Activated CD8-positive, alpha-beta T cell treated with anti-CD3 and anti-CD28 coated beads, Interleukin-2, amount 10 ng/mL, durations not matched to agents 7 days and 5 days (primary cell): ENCODE measurements at regions of chr1 and their contacts with region 1.

Region 1: GRCh38 chr1:19704247-19705113 is 39.8 kb downstream of the HTR6 start:
- DNase-seq: peak; percentile 53
- ATAC-seq: peak; percentile 58
- H3K4me3 Mint-ChIP-seq: no peak overlapping the region
- H3K27ac Mint-ChIP-seq: no peak overlapping the region
- H3K4me1 Mint-ChIP-seq: peaks cover 12% of the 10 kb centered on the region
- H3K27me3 Mint-ChIP-seq: no peaks in the 10 kb centered on the region

Region 2: GRCh38 chr1:19643602-19644394 is 60.7 kb before region 1 on chr1 and contains the start of gene NBL1:
- CTCF ChIA-PET with region 1: no interaction called
- POLR2A ChIA-PET with region 1: no interaction called
- DNase-seq: peak; percentile 82
- ATAC-seq: peak; percentile 87
- H3K4me3 Mint-ChIP-seq: peak within 1 kb of the TSS; percentile 93
- H3K27ac Mint-ChIP-seq: peak within 1 kb of the TSS; percentile 93
- H3K4me1 Mint-ChIP-seq: peaks cover 44% of the 10 kb centered on the region
- H3K27me3 Mint-ChIP-seq: peaks cover 14% of the 10 kb centered on the region
- total RNA-seq, gene NBL1: 40.1 TPM

Region 3: DNA sequence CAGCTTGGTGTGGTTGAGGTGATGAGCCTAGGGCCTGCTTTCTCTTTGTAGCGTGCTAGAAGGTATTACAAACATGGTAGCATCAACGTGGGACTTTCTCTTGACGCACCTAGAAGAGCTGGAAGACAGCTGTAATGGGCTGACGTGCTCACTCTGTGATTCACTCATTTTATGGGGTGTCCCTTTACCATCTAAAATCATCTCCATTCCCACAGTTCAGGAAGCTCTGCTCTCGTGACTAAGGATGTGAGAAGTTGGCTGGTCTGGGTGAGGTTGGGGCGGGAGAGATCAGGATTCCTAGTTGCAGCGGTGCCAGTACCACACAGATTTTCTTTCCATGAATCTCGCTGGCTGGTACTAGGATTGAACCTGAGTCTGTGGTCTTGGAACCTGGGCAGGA is 35.6 kb before region 1 on chr1:
- CTCF ChIA-PET with region 1: interaction called, 12 read pairs
- POLR2A ChIA-PET with region 1: no interaction called
- DNase-seq: no peak
- ATAC-seq: no peak
- H3K4me3 Mint-ChIP-seq: no peak overlapping the region
- H3K27ac Mint-ChIP-seq: no peak overlapping the region
- H3K4me1 Mint-ChIP-seq: peaks cover 7% of the 10 kb centered on the region
- H3K27me3 Mint-ChIP-seq: peaks cover 33% of the 10 kb centered on the region

Region 4: DNA sequence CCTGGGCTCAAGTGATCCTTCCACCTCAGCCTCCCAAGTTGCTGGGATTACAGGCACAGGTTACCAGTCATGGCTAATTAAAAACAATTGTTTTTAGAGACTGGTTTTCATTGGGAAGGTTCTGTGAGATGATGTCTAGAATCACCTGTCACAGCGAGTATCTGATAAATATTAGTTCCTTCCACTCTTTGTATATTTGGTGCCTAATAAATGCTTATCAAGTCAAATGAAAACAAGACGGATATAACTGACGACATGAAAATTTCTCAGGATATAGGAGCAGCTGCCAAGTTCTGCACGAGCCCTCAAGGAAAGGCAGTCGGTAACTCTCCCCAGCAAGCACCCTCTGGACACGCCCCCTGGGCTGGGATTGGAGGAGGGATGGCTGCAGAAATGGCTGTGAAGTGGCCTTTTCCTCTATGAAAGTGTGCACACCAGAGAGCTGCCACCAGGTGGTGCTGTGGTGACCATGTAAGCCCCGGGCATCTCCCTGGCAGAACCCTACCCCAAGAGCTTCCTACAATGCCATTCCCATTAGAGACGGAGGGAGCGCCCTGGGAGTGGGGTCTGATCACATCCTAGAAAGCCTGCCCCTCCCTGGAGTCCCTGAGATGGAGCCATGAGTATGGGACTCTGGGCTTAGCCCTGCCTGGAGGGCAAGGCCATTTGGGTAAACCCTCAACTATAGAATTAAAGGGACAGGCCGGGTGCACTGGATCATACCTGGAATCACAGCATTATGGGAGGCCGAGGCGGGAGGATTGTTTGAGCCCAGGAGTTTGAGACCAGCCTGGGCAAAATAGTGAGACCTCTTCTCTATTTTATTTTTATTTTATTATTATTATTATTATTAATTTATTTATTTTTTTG is 11.1 kb after region 1 on chr1:
- CTCF ChIA-PET with region 1: interaction called, 20 read pairs
- POLR2A ChIA-PET with region 1: no interaction called
- DNase-seq: peak; percentile 89
- ATAC-seq: peak; percentile 98
- H3K4me3 Mint-ChIP-seq: no peak overlapping the region
- H3K27ac Mint-ChIP-seq: no peak overlapping the region
- H3K4me1 Mint-ChIP-seq: peaks cover 15% of the 10 kb centered on the region
- H3K27me3 Mint-ChIP-seq: no peaks in the 10 kb centered on the region

Region 5: DNA sequence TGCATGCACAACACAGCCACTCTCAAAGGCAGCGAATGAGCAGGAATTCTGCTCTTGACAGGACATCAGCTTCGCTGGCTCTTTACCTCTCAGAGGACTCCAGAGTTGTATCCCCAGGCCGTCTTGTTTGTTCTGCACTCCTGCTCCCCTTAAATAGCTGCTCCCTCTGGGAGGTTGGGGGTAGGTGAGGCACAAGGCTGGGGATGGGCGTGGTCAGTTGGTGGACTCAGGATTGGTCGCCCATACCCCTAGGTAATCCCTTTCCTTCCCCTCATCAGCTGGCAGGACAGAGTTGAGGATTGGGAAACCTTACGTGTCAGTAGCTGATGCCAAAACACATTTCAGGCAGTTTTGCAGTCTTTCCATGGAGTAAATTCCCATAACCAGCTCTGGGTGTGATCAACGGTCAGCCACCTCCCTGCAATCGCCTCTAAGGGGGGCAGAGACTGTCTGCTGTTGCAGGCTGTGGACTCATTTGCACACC is 275.1 kb after region 1 on chr1 and contains the start of gene PLA2G2A:
- CTCF ChIA-PET with region 1: no interaction called
- POLR2A ChIA-PET with region 1: no interaction called
- DNase-seq: no peak
- ATAC-seq: no peak
- H3K4me3 Mint-ChIP-seq: no peak within 1 kb of the TSS
- H3K27ac Mint-ChIP-seq: no peak within 1 kb of the TSS
- H3K4me1 Mint-ChIP-seq: no peaks in the 10 kb centered on the region
- H3K27me3 Mint-ChIP-seq: peaks cover 21% of the 10 kb centered on the region
- total RNA-seq, gene PLA2G2A: not detected